Activated T-helper 1 cell treated with anti-CD3 and anti-CD28 coated beads, Interleukin-12 subunit alpha, Interleukin-12 subunit beta, Interleukin-2, Interleukin-4 antibody, amounts not matched to agents 30 ng/mL and 10 ng/mL and 1 ng/mL, durations not matched to agents 14 hours and 24 hours and 36 hours (primary cell): ENCODE measurements at regions of chr16 and their contacts with region 1.

Region 1: DNA sequence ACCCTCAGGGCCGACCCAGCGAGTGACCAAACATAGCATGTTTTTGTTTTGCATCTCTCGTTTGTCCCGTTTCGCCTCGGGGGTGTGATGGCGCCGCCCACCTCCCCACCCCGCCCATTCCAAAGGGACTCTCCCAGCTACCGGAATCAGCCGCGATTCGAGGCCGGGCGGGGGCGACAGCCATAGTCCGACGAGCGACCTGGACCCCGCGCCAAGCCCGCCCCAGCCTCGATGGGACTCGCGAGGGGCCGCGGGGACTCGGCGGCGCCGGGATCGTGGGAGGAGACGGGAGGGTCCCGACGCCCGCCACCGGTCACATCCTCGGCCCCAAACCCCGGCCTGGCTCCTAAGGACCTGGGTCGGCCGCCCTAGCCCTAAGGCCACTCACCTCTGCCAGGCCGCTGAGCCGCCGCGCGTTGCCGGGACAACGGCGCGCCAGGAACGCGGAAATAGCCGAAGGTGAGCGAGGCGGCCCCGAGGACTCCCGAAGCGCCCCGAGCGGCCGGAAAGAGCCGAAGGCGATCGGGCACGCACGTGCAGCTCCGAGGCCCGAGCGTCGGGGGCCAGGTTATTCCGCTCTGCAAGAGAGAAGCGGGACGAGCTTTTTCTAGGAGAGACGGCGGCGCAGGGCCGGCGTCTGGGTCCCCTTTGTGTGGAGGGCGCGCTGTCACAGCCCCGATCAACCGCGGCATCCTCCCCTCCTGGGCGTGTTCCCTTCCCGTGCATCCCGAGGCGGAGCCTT is 1.4 kb downstream of the IFT140 start:
- DNase-seq: peak; percentile 90
- H3K4me3 Mint-ChIP-seq: peak overlapping the region; percentile 91
- H3K27ac Mint-ChIP-seq: peak overlapping the region; percentile 100
- H3K4me1 Mint-ChIP-seq: peaks cover 30% of the 10 kb centered on the region
- H3K27me3 Mint-ChIP-seq: no peaks in the 10 kb centered on the region

Region 2: GRCh38 chr16:1244881-1245280 is 365.6 kb before region 1 on chr16:
- intact Hi-C with region 1: no loop called
- DNase-seq: no peak
- H3K4me3 Mint-ChIP-seq: no peak overlapping the region
- H3K27ac Mint-ChIP-seq: no peak overlapping the region
- H3K4me1 Mint-ChIP-seq: no peaks in the 10 kb centered on the region
- H3K27me3 Mint-ChIP-seq: peaks cover 10% of the 10 kb centered on the region

Region 3: DNA sequence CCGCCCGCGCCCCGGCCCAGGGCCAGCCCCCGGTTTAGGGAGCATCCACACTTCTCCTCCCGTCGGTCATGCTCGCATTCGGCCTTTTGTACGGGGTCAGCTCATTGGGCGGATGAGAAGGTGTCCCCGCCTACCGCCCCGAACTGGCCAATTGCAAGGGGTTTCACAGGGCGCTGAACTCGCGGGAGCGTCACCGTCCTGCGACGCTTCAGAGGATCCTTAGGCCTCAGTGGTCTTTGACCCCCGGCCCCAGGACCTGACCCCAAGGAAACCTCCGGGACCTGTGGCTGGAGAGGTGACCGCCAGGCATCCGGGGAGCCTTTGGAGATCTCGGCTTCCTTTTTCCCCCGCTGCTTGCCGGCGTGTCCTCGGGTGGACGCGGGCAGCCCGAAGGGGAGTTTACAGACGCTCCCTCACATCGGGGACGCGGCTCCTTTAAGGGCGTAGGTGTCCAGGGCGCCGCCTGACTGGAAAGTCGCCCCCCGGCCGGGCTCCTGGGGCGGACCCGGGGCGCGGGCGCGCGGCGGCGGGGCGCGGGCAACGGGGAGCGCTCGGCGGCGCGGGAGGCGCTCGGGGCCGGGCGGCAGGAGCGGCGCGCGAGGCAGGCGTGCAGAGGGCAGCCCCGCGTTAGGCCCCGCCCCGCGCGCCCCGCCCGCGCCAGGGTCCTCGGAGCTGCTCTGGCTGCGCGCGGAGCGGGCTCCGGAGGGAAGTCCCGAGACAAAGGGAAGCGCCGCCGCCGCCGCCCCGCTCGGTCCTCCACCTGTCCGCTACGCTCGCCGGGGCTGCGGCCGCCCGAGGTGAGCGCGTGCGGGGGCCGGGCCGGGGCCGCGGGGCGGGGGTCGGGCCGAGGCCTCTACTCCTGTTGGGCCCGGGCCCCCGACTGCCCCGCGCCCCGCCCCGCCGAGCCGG is 301.2 kb before region 1 on chr16 and contains the start of gene UBE2I:
- intact Hi-C with region 1: loop called (anchors 1 kb)
- DNase-seq: peak; percentile 98
- H3K4me3 Mint-ChIP-seq: peak within 1 kb of the TSS; percentile 95
- H3K27ac Mint-ChIP-seq: peak within 1 kb of the TSS; percentile 100
- H3K4me1 Mint-ChIP-seq: peaks cover 20% of the 10 kb centered on the region
- H3K27me3 Mint-ChIP-seq: peaks cover 2% of the 10 kb centered on the region
- total RNA-seq, gene UBE2I: 257 TPM in 2 replicates

Region 4: DNA sequence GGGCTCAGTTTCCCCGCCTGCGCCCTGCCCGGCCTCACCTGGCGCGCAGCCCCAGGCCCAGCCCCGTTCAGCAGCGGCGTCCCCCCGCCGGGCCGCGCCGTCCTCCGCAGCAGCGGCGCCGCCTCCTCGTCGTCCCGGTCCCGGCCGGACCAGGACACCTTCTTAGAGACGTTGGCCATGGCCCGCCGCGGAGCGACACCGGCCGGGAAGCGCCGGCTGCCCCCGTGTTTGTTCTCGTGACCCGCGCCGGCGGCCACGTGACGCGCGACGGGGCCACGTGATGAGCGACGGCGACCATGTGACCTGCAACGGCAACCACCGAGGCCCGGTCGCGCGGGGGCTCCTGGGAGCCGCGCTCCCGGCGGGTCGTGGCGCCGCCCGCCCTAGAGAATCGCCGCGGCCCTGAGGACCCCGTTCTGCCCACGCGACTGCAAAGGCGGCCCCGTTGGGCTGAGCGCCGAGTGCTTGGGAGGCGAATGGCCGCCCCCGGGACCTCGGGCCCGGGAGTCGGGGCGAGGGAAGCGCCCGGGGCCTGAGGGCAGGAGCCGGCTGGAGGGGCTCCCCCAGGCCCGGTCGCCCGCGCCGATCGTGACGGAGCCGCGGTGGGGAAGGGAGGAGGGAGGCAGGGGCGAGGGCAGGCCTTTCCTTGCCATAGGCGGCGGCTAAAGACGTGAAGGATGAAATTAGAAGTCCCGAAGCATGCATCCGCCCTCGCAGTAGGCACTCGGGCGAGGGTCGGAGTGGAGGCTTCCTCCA is 135.5 kb before region 1 on chr16 and contains the start of gene CLCN7:
- intact Hi-C with region 1: loop called (anchors 1 kb)
- DNase-seq: peak; percentile 89
- H3K4me3 Mint-ChIP-seq: peak within 1 kb of the TSS; percentile 83
- H3K27ac Mint-ChIP-seq: peak within 1 kb of the TSS; percentile 89
- H3K4me1 Mint-ChIP-seq: peaks cover 6% of the 10 kb centered on the region
- H3K27me3 Mint-ChIP-seq: peaks cover 2% of the 10 kb centered on the region
- total RNA-seq, gene CLCN7: 61.7 and 68.7 TPM in 2 replicates

Region 5: DNA sequence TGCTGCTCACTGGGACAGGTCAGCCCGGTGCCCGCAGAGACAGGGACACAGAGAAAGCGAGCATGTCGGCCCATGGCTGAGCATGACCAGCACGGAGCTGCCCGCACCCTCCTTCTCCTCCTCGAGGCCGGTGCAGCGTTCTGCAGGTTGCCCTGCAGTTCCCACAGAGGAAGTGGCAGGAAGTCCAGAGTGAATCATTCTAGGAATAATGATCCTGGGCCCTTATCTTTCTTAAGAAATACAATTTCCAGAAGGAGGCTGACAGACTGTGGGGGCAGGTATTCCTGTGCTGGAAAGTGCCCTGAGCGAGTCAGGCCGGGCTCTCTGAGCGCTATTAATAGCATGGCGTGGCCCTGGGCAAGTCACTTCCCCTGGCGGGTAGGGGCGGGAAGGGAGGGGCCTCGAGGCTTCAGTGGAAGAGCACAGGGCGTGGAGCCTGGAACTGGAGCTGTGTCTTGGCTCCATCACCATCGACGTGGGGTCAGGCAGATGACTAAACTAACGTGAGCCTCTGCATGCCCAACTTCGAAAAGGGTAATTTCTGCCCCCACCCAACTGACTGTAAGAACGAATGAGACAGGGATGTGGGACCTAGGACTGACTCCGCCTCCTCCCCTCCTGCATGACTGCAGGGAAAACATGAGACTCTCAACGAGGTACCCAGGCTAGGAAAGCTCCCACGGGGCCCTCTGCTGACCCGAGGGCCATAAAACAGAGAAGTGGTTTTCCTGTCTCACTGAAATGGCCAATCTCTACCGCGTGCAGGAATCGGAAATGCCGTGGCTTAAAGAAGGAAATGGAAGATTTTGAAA is 67.2 kb before region 1 on chr16:
- intact Hi-C with region 1: loop called (anchors 2 kb)
- DNase-seq: peak; percentile 38
- H3K4me3 Mint-ChIP-seq: peak overlapping the region; percentile 70
- H3K27ac Mint-ChIP-seq: peak overlapping the region; percentile 91
- H3K4me1 Mint-ChIP-seq: peaks cover 34% of the 10 kb centered on the region
- H3K27me3 Mint-ChIP-seq: no peaks in the 10 kb centered on the region

Region 6: DNA sequence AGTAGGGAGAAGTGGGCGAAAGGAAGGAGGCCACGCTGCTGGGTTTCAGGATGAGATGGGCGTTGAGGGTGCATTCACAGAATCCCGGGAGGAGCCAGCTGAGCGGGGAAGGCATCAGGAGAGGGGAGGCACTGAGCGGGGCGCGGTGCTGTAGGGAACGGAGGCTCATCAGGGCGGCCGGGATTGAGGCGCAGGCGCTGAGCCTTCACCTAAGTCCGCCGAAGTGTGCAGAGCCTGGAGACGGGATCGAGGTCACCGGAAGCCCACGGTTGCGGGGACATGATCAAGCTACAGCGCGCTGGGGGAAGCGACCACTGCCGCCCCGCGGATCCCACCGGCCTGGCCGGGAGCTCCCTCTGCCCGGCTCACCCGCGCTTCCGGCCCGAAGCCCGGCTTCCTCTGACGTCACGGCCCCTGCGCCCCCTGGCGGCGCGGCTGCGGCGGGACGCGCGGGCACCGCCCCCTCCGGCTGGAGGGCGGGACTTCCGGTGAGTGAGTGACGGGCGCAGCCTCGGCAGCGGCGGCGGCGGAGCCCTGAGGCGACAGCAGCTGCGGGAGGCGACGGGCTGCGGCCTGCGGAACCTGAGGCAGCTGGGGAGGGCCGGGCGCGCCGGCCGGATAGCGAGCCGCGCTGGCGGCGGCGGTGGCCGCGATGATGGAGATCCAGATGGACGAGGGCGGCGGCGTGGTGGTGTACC is 95.4 kb after region 1 on chr16 and contains the start of gene MAPK8IP3:
- intact Hi-C with region 1: loop called (anchors 1 kb)
- DNase-seq: peak; percentile 96
- H3K4me3 Mint-ChIP-seq: peak within 1 kb of the TSS; percentile 94
- H3K27ac Mint-ChIP-seq: peak within 1 kb of the TSS; percentile 96
- H3K4me1 Mint-ChIP-seq: peaks cover 28% of the 10 kb centered on the region
- H3K27me3 Mint-ChIP-seq: no peaks in the 10 kb centered on the region
- total RNA-seq, gene MAPK8IP3: 84.4 and 84.6 TPM in 2 replicates

Region 7: GRCh38 chr16:1971796-1972489 is 361.5 kb after region 1 on chr16 and contains the start of gene TBL3:
- intact Hi-C with region 1: loop called (anchors 5 kb)
- DNase-seq: peak; percentile 97
- H3K4me3 Mint-ChIP-seq: peak within 1 kb of the TSS; percentile 97
- H3K27ac Mint-ChIP-seq: peak within 1 kb of the TSS; percentile 99
- H3K4me1 Mint-ChIP-seq: peaks cover 19% of the 10 kb centered on the region
- H3K27me3 Mint-ChIP-seq: no peaks in the 10 kb centered on the region
- total RNA-seq, gene TBL3: 84.9 and 87.3 TPM in 2 replicates

Region 8: DNA sequence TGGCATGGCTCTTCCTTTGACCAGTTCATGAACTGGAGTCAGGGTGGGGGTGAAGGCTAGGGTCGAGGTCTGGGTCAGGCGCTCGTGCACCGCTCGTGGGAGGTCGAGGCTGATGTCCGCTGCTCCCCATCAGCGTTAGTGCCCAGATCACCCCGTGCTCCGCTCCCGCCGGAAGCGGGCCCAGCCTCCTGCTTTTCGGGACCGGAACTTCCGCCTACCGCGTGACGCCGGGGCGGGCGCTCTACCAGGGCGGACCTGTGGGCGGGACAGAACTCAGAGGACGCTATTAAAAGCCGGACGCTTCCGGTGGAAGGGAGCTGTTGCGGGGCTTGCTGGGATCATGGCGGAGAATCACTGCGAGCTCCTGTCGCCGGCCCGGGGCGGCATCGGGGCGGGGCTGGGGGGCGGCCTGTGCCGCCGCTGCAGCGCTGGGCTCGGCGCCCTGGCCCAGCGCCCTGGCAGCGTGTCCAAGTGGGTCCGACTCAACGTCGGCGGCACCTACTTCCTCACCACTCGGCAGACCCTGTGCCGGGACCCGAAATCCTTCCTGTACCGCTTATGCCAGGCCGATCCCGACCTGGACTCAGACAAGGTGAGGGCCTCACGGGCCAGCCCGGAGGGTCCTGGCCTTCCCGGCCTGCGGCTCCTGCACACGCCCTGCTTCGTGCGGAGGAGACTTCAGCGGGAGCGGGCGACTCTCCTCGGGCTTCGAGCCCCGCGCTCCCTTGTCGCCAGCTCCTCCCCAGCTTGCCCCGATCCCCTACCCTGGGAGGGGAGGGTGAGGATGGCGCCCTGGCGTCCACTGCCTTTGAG is 1072.0 kb after region 1 on chr16 and contains the start of gene KCTD5:
- intact Hi-C with region 1: loop called (anchors 10 kb)
- DNase-seq: peak; percentile 96
- H3K4me3 Mint-ChIP-seq: peak within 1 kb of the TSS; percentile 99
- H3K27ac Mint-ChIP-seq: peak within 1 kb of the TSS; percentile 97
- H3K4me1 Mint-ChIP-seq: peaks cover 13% of the 10 kb centered on the region
- H3K27me3 Mint-ChIP-seq: peaks cover 2% of the 10 kb centered on the region
- total RNA-seq, gene KCTD5: 63.9 and 69.6 TPM in 2 replicates